Right cardiac atrium (tissue), 5 donors: ENCODE measurements at regions of chr13 and their contacts with region 1.

Region 1: DNA sequence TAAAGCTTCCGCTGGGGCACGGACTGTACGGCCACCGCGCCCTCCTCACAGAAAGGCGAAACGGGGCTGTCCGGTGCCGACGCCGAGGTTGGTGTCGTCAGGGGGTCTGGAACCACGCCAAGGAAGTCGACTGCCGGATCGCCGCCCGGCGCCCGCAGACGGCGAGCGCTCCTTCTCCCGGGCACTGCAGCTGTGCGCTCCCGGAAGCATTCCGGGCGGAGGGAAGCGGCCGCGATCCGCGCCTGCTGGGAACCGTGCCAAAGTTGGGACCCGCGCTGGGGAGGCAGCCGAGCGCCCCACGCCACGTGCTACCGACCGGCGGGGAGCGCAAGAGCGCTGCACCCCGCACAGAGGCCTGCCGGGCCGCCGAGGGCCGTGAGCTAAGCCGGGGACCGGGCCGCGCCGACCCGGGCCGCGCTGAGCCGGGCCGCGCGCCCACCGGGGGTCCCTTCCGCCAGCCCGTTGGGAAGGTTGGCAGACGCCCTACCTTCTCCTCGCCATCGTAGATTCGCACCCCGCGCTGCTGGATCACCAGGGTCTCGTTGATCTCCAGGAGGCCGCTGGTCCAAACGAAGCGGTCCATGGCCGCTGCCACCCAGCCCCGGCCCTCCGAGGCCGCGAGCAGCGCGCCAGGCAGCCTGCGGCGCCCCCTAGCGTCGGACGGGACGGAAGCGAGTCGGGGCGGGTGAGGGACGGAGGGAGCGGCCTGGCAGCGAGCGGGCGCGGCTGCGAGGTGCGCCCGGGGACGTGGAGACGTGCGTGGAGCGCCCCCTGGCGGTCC is at the start of gene VPS36:
- DNase-seq: peak; percentile 97 to 99 (median 99)
- ATAC-seq: peak; percentile 92 to 95
- H3K4me3 ChIP-seq: peak within 1 kb of the TSS; percentile 81
- H3K27ac ChIP-seq: peak within 1 kb of the TSS; percentile 97
- H3K4me1 ChIP-seq: peaks cover 2% of the 10 kb centered on the region
- H3K27me3 ChIP-seq: no peaks in the 10 kb centered on the region
- total RNA-seq, gene VPS36: 32.6 to 38.8 (median 34.9) TPM

Region 2: GRCh38 chr13:52344108-52344507 is 106.1 kb before region 1 on chr13:
- intact Hi-C with region 1: loop called in 3 of 4 experiments (anchors 5 to 10 kb)
- DNase-seq: peak in 1 of 3 donors; percentile 60
- ATAC-seq: peak; percentile 74 to 76
- H3K4me3 ChIP-seq: no peak overlapping the region
- H3K27ac ChIP-seq: no peak overlapping the region
- H3K4me1 ChIP-seq: no peaks in the 10 kb centered on the region
- H3K27me3 ChIP-seq: no peaks in the 10 kb centered on the region

Region 3: DNA sequence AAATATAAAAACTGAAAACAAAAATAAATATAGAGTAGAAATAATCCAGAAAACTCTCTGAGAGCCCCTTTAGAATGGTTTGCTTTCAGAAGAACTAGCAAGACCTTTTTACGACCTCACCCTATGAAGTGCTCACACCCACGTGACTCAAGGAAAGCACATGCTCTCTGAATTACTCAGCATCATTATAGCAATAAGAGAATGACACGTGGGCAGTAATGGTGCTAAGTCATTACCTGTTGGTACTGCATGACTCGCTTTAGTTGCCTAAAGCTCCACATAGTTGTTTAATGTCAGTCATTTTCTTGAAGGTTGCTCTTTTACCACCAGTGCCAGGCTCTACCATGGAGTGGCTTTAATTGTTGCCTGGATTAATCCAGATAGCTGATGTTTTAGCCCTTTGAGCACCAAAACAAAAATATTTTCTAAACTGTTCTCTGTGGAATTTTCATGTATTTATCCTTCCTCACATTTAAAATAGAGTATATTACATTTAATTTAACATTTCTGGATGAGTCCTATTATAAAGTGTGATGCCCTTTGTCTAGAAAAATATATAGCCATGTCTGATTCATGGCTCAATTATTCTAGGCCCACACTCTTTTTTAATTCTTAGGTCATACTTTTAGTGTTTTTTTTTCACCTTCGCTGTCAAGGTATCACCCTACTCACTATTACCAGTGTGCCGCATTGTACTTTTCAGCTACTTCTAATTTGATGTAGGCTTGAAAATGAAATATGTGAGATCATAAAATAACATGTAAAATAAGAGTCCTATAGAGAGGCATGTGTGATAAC is 101.0 kb before region 1 on chr13:
- intact Hi-C with region 1: loop called in 3 of 4 experiments (anchors 5 to 10 kb)
- DNase-seq: no peak
- ATAC-seq: peak in 1 of 2 donors; percentile 41
- H3K4me3 ChIP-seq: no peak overlapping the region
- H3K27ac ChIP-seq: no peak overlapping the region
- H3K4me1 ChIP-seq: no peaks in the 10 kb centered on the region
- H3K27me3 ChIP-seq: no peaks in the 10 kb centered on the region

Region 4: GRCh38 chr13:52399708-52400107 is 50.5 kb before region 1 on chr13:
- intact Hi-C with region 1: loop called in 1 of 4 experiments (anchors 5 kb)
- DNase-seq: no peak
- ATAC-seq: peak in 1 of 2 donors; percentile 70
- H3K4me3 ChIP-seq: no peak overlapping the region
- H3K27ac ChIP-seq: no peak overlapping the region
- H3K4me1 ChIP-seq: peaks cover 3% of the 10 kb centered on the region
- H3K27me3 ChIP-seq: no peaks in the 10 kb centered on the region

Region 5: DNA sequence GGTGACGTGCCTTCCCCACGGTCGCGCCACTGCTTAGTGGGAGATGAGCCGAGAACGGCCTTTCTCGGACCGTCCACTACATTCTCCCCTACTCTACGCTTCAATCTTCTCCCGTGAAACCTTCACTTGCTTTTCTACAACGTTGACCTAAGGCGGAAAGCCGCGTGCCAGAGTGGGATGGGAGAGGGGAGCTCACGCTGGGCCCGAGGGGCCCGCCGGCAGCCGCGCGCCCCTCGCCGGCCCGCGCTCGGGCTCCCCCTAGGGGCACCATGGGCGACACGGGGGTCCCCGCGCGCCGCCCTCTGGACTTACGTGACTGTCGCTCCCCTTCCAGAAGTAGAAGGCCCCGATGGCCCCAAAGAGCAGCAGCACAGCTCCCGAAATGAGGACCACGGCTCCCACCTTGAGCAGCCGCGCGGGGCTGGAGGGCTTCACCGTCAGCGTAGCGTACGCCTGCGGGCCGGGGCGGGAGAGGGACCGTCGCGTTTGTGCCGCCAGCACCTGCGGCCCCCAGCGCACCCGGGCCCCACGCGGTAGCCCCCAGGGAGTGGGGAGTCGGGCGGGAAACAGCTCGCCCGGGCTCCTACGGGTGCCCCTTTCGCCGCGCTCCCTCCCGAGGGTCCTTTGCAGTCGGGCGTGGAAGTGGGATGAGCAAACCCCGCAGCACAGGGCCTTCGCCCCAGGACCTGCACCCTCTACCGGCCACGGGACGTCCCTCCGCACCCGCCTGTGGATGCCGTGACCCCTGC is 288.7 kb after region 1 on chr13:
- intact Hi-C with region 1: no loop called
- DNase-seq: peak; percentile 22 to 64 (median 60)
- ATAC-seq: peak; percentile 68 to 73
- H3K4me3 ChIP-seq: peak overlapping the region; percentile 32
- H3K27ac ChIP-seq: no peak overlapping the region
- H3K4me1 ChIP-seq: no peaks in the 10 kb centered on the region
- H3K27me3 ChIP-seq: no peaks in the 10 kb centered on the region